Mammary epithelial cell (primary cell): ENCODE measurements at regions of chr3 and their contacts with region 1.

Region 1: DNA sequence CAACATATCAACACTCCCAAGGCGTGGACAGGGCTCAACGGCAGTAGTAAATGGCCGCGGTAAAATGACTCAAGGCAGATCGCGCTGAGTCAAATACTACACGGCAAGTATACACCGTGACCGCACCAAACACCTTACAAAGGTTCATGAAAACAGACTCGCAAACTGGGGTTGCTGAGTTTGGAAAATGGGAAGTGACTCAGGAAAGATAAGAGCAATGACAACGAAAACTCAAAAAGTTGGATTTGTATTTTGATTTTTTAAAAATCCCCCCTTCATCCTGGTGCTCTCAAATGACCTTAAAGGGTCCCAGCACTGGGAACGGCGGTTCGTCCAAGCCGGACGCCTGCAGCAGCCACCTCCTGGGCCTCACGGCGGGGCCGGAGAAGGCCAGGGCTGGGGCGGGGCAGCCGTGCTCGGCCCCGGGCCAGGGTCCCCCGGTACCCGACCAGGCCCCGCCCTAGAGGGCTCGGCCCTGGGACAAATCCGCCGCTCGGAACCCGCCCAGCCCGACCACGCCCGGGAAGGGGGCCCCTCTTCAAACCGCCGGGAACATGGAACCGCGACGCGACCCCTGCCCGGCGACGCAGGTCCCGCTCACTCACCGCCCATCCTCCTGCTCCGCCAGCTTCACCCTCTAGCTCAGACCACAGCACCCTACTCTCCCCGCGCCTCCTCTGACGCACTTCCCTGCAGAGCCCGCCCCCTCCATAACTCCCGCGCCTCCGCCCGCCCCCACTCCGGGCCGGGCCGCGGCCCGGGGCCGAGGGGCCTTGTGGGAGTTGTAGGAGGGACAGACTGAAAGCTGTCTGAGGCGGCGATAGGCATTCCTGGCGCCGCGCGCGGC is at the start of gene CLDND1:
- DNase-seq: peak; percentile 98
- H3K4me3 ChIP-seq: peak within 1 kb of the TSS; percentile 91 to 94 (median 93)
- H3K27ac ChIP-seq: peak within 1 kb of the TSS; percentile 97
- H3K4me1 ChIP-seq: peaks cover 16% of the 10 kb centered on the region
- H3K27me3 ChIP-seq: no peaks in the 10 kb centered on the region
- CTCF ChIP-seq: no peak
- total RNA-seq, gene CLDND1: 76.9 to 90.0 TPM

Region 2: DNA sequence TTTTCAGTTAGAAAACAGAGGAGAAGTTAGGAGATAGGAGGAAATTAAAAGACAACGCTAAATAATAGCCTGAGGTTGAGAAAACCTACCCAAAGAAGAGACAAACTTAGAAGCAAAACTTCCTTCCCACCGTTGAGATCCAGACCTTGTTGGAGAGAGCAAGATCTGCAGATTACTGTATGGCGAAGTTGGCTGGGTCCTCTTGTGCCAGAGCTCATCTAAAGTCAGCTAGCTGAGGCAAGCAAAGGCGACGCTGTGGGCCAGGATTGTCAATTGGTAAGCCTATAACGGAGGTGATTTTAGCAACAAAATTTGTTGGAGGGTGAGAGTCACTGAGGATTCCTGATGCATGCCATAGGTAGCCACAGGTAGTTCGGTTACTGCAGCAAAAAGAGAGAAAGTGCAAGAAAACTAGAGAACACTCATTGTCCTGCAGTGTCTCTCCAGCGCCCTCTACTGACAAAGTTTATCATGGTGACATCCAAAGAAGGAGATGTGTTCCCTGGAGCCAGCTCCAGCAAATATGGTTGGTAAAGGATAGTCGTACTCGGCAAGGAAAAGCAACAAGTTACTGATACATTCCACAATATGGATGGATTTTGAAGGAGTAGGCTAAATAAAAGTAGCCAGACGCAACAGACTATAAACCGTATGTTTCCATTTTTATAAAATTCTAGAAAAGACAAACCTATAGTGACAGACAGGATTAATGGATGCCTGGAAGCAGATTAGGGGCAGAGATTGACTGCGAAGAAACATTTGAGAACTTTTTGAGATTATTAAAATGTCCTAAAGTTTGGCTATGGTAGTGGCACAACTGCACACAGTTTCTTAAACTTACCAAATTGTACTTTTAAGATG is 178.6 kb before region 1 on chr3:
- CTCF ChIA-PET with region 1: no interaction called
- dilution Hi-C with region 1: no loop called
- in situ Hi-C with region 1: no loop called
- intact Hi-C with region 1: loop called (anchors 2 kb)
- DNase-seq: peak; percentile 55
- H3K4me3 ChIP-seq: no peak overlapping the region
- H3K27ac ChIP-seq: no peak overlapping the region
- H3K4me1 ChIP-seq: peaks cover 3% of the 10 kb centered on the region
- H3K27me3 ChIP-seq: peaks cover 4% of the 10 kb centered on the region
- CTCF ChIP-seq: peak; percentile 80 to 81

Region 3: GRCh38 chr3:98359993-98360675 is 162.3 kb before region 1 on chr3:
- CTCF ChIA-PET with region 1: no interaction called
- dilution Hi-C with region 1: no loop called
- in situ Hi-C with region 1: no loop called
- intact Hi-C with region 1: loop called (anchors 1 kb)
- DNase-seq: peak; percentile 65
- H3K4me3 ChIP-seq: no peak overlapping the region
- H3K27ac ChIP-seq: no peak overlapping the region
- H3K4me1 ChIP-seq: peaks cover 4% of the 10 kb centered on the region
- H3K27me3 ChIP-seq: no peaks in the 10 kb centered on the region
- CTCF ChIP-seq: peak; percentile 22 to 43

Region 4: GRCh38 chr3:98563661-98564281 is 41.3 kb after region 1 on chr3:
- CTCF ChIA-PET with region 1: no interaction called
- dilution Hi-C with region 1: no loop called
- in situ Hi-C with region 1: no loop called
- intact Hi-C with region 1: loop called (anchors 1 kb)
- DNase-seq: peak; percentile 74
- H3K4me3 ChIP-seq: no peak overlapping the region
- H3K27ac ChIP-seq: peak overlapping the region; percentile 69
- H3K4me1 ChIP-seq: peaks cover 15% of the 10 kb centered on the region
- H3K27me3 ChIP-seq: no peaks in the 10 kb centered on the region
- CTCF ChIP-seq: no peak

Region 5: GRCh38 chr3:98763076-98763475 is 240.6 kb after region 1 on chr3 and contains the start of gene ST3GAL6:
- CTCF ChIA-PET with region 1: no interaction called
- dilution Hi-C with region 1: no loop called
- in situ Hi-C with region 1: no loop called
- intact Hi-C with region 1: no loop called
- DNase-seq: peak; percentile 43
- H3K4me3 ChIP-seq: no peak within 1 kb of the TSS
- H3K27ac ChIP-seq: no peak within 1 kb of the TSS
- H3K4me1 ChIP-seq: peaks cover 7% of the 10 kb centered on the region
- H3K27me3 ChIP-seq: no peaks in the 10 kb centered on the region
- CTCF ChIP-seq: no peak
- total RNA-seq, gene ST3GAL6: 5.8 to 7.0 TPM